ENCODE measurements at regions of chr17 and their contacts with region 1.

Region 1: DNA sequence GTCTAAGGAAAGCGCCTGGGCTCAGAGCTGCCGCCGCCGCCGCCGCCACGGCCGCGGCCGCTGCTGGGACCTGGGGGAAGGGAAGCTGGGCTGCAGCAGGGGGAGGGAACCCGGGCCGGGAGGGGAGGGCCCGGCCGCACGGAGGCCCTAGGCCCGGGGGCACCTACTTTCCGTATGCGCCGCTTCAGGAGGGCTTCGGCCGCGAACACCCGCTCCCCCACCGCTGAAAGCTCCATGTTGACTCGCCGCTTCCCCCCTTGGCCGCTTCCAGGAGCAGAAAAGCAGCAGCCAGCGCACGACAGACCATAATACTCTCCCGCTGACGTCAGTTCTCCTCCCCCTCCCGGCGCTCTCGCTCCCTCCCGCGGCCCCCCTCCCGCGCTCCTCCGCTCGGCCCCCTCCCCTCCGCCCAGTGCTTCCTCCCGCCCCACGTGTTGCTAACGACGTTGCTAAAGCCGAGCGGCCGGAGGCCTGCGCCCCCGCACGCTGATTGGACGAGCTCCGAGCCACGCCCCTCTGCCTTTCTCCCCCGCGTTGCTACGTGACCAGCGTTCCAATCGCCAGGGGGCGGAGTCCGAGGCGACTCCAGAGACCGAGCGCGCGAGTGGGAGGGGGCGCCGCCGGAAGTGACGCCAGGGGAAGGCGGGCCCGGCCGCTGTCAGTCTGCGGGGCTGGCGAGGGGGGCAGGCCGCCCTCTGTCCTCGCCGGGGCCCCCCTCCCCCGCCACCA is at the start of gene CBX8:
- DNase-seq: peak; percentile 100
- CTCF ChIP-seq: peak; percentile 4

Region 2: DNA sequence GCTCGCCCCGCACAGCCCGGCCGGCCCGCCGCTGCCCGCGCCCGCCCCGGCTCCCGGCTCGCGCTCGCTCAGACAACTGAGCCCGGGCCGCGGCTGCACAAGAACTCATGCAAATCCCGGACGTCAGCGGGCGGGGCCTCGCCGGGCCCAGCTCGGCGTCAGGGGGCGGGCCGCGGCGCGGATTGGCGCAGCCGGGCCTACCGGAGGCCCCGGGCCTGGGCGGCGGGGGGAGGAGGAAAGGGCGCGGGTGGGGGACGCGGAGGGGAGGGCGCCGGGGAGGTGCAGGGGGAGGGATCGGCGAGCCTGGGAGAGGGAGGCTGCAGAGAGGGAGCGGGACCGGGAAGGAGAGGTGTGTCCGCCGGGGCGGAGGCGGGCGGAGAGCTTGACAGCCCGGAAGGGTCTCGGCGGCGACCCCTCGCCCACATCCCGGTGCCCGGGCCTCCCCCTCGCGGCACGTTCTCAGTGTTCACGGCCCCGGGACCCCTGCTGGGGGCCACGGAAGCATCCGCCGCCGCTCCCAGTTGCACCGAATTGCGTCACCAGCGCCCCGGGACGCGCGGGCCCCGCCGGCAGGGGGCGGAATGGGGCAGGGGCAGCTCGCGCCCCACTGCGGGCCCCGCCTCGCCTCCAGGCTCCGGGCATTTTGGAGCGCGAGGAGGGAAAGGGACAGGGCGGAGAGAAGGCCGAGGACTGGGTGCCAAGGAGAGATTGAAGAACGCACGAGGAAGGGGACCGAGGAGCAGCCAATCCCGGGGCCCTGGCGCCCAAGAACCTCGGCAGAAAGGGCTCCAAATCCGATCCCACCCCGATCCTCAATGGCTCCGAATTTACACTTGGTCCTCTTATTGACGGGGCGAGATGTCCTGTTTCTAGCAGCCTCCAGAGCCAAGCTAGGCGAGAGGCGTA is 42.7 kb after region 1 on chr17 and contains the start of gene CBX4:
- in situ Hi-C with region 1: loop called (anchors 10 kb)
- DNase-seq: peak; percentile 98
- CTCF ChIP-seq: peak; percentile 71

Region 3: DNA sequence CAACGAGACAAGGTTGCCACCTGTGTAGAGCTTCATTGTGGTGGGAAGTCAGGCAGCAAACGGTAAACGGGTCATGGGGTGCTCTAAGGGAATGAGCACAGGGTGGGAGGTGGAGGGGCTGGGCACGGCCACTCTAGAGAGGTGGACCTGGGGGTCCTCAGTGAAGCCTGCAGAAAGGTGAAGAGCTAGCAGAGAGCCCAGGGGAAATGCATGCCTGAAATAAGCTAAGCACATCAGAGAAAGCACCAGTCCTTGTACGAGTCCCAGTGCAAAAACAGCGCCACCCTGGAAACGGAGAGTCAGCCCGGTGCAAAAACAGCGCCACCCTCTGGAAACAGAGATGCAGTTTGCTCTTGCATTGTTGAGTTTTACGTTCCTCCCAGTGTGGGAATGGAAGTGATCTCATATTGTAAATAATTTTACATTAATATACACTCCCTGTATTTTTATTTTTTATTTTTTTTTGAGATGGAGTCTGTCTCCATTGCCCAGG is 173.7 kb after region 1 on chr17:
- in situ Hi-C with region 1: loop called (anchors 25 kb)
- DNase-seq: no peak
- CTCF ChIP-seq: peak; percentile 77

Measured in GM13977 (cell line).